Heart left ventricle (tissue), 16 donors: ENCODE measurements at regions of chr11 and their contacts with region 1.

Region 1: GRCh38 chr11:123407130-123407995 is 22.7 kb upstream of the GRAMD1B start:
- DNase-seq: peak in 4 of 5 donors; percentile 52 to 73 (median 67)
- ATAC-seq: peak; percentile 34 to 49 (median 43)
- H3K4me3 ChIP-seq: peak overlapping the region in 4 of 12 donors; percentile 23 to 41 (median 34)
- H3K27ac ChIP-seq: peak overlapping the region in 7 of 12 donors; percentile 15 to 89 (median 47)
- H3K4me1 ChIP-seq: peaks cover 0 to 54% (median 14%) of the 10 kb centered on the region in 12 donors
- H3K27me3 ChIP-seq: no peaks in the 10 kb centered on the region
- CTCF ChIP-seq: peak; percentile 41 to 73 (median 60)
- POLR2A ChIP-seq: no peak

Region 2: DNA sequence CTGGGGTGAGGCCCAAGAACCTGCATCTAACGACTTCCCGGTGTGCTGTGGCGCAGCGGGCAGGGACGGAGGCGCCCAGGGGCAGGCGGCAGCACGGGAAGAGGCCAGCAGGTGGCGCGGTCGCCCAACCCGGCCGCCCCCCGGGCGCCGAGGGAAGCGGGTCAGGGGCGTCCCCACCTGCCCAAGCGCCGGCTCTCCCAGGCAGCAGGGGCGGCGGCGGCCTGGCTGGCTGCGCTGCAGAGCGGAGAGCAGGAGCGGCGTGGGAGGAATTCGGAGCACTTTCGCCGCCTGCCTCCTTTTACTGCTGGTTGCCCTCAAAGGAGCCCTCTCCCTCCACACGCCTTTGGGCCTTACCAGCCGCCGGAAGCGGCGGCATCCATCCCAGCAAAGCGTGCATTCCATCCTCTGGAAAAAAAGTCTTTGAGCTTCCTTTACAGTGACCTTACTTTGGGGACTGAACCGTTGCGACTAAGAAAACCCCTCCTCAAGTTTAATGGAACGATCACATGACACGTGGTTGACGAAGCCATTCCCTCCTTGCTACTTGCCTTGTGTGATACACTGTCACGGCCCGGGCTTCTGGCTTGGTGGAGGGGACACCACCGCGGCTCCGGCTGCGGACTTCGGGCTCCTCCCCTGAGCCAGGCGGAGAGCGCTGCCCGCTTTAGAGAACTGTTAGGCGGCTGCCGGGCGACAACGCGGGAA is 105.5 kb before region 1 on chr11:
- intact Hi-C with region 1: loop called (anchors 1 to 10 kb)
- DNase-seq: peak; percentile 56 to 86 (median 68)
- ATAC-seq: peak; percentile 29 to 92 (median 81)
- H3K4me3 ChIP-seq: peak overlapping the region; percentile 24 to 60 (median 45)
- H3K27ac ChIP-seq: peak overlapping the region in 5 of 12 donors; percentile 15 to 50 (median 33)
- H3K4me1 ChIP-seq: peaks cover 0 to 24% (median 13%) of the 10 kb centered on the region in 12 donors
- H3K27me3 ChIP-seq: peaks cover 0 to 18% (median 0%) of the 10 kb centered on the region in 9 donors
- CTCF ChIP-seq: peak; percentile 75 to 96 (median 91)
- POLR2A ChIP-seq: no peak

Region 3: DNA sequence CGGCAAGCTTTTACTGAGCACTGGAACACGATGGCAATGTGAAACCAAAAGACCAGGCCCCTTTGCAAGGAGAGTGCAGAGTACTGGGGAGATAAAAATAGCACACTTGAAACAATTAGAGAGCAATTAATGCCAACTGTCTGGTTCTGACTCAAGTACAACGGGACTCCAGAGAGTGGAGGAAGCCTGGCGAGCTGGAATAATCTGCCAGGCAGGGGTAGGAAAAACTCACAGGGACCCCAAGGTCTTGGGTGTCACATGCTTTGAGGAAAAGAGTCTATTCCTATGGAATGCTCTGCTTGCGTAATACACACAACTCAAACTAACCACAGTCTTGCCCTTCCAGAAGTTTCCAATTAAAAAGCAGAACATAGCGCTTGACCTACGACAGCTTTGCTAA is 99.3 kb before region 1 on chr11:
- intact Hi-C with region 1: loop called in 8 of 10 experiments (anchors 5 to 10 kb)
- DNase-seq: peak in 3 of 5 donors; percentile 21 to 60 (median 40)
- ATAC-seq: peak; percentile 88 to 92 (median 92)
- H3K4me3 ChIP-seq: no peak overlapping the region
- H3K27ac ChIP-seq: peak overlapping the region; percentile 44 to 88 (median 76)
- H3K4me1 ChIP-seq: peaks cover 0 to 22% (median 10%) of the 10 kb centered on the region in 12 donors
- H3K27me3 ChIP-seq: peaks cover 0 to 3% (median 0%) of the 10 kb centered on the region in 9 donors
- CTCF ChIP-seq: no peak
- POLR2A ChIP-seq: no peak

Region 4: DNA sequence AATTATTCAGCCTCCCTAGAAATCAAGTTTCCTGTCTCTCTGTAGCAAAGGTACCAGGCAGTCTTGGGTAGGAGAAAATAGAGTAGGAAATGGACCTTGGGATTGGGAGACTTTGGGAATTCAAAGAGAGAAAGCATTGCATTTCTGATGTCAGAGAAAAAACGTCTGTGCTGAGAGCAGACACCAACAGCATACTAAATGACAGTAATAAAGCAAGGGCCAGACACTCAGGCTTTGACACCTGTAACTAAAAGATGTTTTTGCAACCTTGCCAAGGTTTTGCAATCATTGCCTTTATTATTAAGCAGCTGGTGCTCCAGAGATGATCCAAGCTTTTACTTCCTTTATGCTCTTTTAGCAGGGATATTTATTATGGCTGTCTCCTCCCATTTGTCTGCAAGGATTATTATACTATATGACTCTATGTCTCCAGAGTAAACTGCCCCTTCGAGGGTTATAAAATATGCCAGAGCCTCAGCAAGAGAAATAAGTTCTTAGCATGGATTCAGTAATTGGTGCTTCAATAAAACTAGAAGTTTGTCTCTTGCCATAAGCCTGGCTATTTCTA is 62.5 kb before region 1 on chr11:
- intact Hi-C with region 1: no loop called
- DNase-seq: no peak
- ATAC-seq: no peak
- H3K4me3 ChIP-seq: no peak overlapping the region
- H3K27ac ChIP-seq: no peak overlapping the region
- H3K4me1 ChIP-seq: no peaks in the 10 kb centered on the region
- H3K27me3 ChIP-seq: no peaks in the 10 kb centered on the region
- CTCF ChIP-seq: no peak
- POLR2A ChIP-seq: no peak

Region 5: GRCh38 chr11:123357961-123358841 is 49.2 kb before region 1 on chr11:
- intact Hi-C with region 1: loop called in 4 of 10 experiments (anchors 2 to 5 kb)
- DNase-seq: peak; percentile 21 to 65 (median 44)
- ATAC-seq: peak; percentile 39 to 70 (median 63)
- H3K4me3 ChIP-seq: peak overlapping the region; percentile 34 to 69 (median 58)
- H3K27ac ChIP-seq: peak overlapping the region in 11 of 12 donors; percentile 52 to 83 (median 77)
- H3K4me1 ChIP-seq: peaks cover 0 to 26% (median 8%) of the 10 kb centered on the region in 12 donors
- H3K27me3 ChIP-seq: peaks cover 0 to 38% (median 5%) of the 10 kb centered on the region in 9 donors
- CTCF ChIP-seq: peak in 10 of 12 donors; percentile 8 to 57 (median 34)
- POLR2A ChIP-seq: no peak

Region 6: GRCh38 chr11:123364080-123364479 is 43.3 kb before region 1 on chr11:
- intact Hi-C with region 1: loop called in 6 of 10 experiments (anchors 2 to 5 kb)
- DNase-seq: peak in 1 of 5 donors; percentile 37
- ATAC-seq: peak; percentile 36 to 78 (median 69)
- H3K4me3 ChIP-seq: peak overlapping the region in 1 of 12 donors; percentile 1
- H3K27ac ChIP-seq: peak overlapping the region; percentile 49 to 94 (median 84)
- H3K4me1 ChIP-seq: peaks cover 0 to 36% (median 18%) of the 10 kb centered on the region in 12 donors
- H3K27me3 ChIP-seq: peaks cover 0 to 22% (median 0%) of the 10 kb centered on the region in 9 donors
- CTCF ChIP-seq: no peak
- POLR2A ChIP-seq: no peak

Region 7: DNA sequence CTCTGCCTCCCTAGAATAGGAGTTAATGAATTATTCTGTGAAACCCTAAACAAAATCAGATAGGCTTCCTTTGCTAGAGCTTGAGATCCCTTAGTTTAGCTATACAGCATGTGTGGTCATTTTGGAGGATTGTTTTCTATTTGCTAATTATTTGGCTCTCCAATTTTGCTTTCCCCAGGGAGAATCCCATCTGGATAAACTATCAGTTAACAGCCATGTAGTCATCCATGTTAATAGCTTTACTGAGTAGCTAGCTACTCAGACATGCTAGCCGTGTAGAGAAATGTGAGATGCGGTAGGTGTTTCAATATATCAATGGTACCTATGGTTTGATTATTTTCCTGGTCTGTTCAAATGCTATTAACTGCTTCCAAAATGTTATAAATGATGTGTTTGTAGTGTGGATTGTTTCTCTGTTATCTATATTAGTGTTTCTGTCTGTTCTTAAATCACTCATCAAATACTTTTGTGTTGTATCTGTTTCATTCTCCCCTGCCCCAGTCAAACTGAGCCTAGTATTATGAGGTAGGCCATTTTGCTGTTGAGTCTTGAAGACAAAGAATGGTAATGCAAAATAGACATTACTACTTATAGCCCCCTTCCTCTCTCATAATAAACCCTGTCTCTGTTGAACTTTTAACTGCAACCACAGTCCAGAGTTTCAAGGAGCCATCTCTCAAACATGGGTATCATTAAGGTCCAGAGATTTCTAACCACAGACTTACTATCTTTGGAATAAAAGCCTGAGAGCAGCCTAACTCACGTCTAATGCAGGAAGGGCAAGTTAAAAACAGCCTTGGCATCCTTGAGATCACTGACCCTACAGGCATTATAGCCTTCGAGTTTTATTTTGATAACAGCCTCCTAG is 33.4 kb before region 1 on chr11:
- intact Hi-C with region 1: loop called in 2 of 10 experiments (anchors 2 to 5 kb)
- DNase-seq: no peak
- ATAC-seq: peak in 3 of 4 donors; percentile 5 to 27 (median 15)
- H3K4me3 ChIP-seq: no peak overlapping the region
- H3K27ac ChIP-seq: peak overlapping the region; percentile 16 to 89 (median 65)
- H3K4me1 ChIP-seq: peaks cover 0 to 43% (median 11%) of the 10 kb centered on the region in 12 donors
- H3K27me3 ChIP-seq: no peaks in the 10 kb centered on the region
- CTCF ChIP-seq: no peak
- POLR2A ChIP-seq: no peak

Region 8: DNA sequence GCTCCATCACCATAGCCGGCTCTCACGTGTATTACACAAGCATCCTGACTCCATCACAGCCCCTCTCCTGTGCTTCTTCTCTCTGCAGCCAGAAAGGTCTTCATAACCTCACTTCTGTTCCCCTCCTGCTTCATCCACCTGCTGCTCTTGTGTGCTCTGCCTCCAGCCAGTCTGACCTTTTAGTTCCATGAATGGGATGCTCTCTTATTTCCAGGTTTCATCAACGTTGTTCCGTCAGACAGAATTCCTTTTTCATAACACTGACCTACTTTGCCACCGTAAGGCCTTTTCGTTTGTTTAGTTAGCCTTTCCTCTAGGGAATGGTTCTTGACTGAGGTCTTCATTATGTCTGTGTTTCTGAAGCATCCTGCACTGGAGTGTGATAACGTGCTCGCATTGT is 41.5 kb after region 1 on chr11:
- intact Hi-C with region 1: no loop called
- DNase-seq: no peak
- ATAC-seq: no peak
- H3K4me3 ChIP-seq: no peak overlapping the region
- H3K27ac ChIP-seq: no peak overlapping the region
- H3K4me1 ChIP-seq: peaks cover 0 to 36% (median 18%) of the 10 kb centered on the region in 12 donors
- H3K27me3 ChIP-seq: no peaks in the 10 kb centered on the region
- CTCF ChIP-seq: no peak
- POLR2A ChIP-seq: no peak

Region 9: GRCh38 chr11:123577081-123577598 is 169.8 kb after region 1 on chr11:
- intact Hi-C with region 1: no loop called
- DNase-seq: peak; percentile 60 to 85 (median 66)
- ATAC-seq: peak in 3 of 4 donors; percentile 62 to 66 (median 63)
- H3K4me3 ChIP-seq: no peak overlapping the region
- H3K27ac ChIP-seq: no peak overlapping the region
- H3K4me1 ChIP-seq: peaks cover 0 to 14% (median 2%) of the 10 kb centered on the region in 12 donors
- H3K27me3 ChIP-seq: no peaks in the 10 kb centered on the region
- CTCF ChIP-seq: peak; percentile 83 to 93 (median 90)
- POLR2A ChIP-seq: no peak

Region 10: GRCh38 chr11:123588117-123588863 is 180.9 kb after region 1 on chr11:
- intact Hi-C with region 1: no loop called
- DNase-seq: no peak
- ATAC-seq: no peak
- H3K4me3 ChIP-seq: no peak overlapping the region
- H3K27ac ChIP-seq: no peak overlapping the region
- H3K4me1 ChIP-seq: peaks cover 0 to 18% (median 0%) of the 10 kb centered on the region in 12 donors
- H3K27me3 ChIP-seq: no peaks in the 10 kb centered on the region
- CTCF ChIP-seq: no peak
- POLR2A ChIP-seq: no peak